Endothelial cell of umbilical vein (primary cell): ENCODE measurements at regions of chr11 and their contacts with region 1.

Region 1: GRCh38 chr11:19561011-19561410 is 151.6 kb upstream of the NAV2 start:
- DNase-seq: peak; percentile 81
- H3K4me3 ChIP-seq: no peak overlapping the region
- H3K27ac ChIP-seq: peak overlapping the region; percentile 61
- H3K4me1 ChIP-seq: peaks cover 23% of the 10 kb centered on the region
- H3K27me3 ChIP-seq: no peaks in the 10 kb centered on the region
- CTCF ChIP-seq: no peak
- POLR2A ChIP-seq: no peak

Region 2: GRCh38 chr11:19595840-19596751 is 35.1 kb after region 1 on chr11:
- CTCF ChIA-PET with region 1: interaction called, 21 read pairs
- POLR2A ChIA-PET with region 1: no interaction called
- dilution Hi-C with region 1: no loop called
- intact Hi-C with region 1: loop called (anchors 1 kb)
- DNase-seq: peak; percentile 91
- H3K4me3 ChIP-seq: no peak overlapping the region
- H3K27ac ChIP-seq: peak overlapping the region; percentile 95
- H3K4me1 ChIP-seq: peaks cover 34% of the 10 kb centered on the region
- H3K27me3 ChIP-seq: no peaks in the 10 kb centered on the region
- CTCF ChIP-seq: no peak
- POLR2A ChIP-seq: no peak

Region 3: DNA sequence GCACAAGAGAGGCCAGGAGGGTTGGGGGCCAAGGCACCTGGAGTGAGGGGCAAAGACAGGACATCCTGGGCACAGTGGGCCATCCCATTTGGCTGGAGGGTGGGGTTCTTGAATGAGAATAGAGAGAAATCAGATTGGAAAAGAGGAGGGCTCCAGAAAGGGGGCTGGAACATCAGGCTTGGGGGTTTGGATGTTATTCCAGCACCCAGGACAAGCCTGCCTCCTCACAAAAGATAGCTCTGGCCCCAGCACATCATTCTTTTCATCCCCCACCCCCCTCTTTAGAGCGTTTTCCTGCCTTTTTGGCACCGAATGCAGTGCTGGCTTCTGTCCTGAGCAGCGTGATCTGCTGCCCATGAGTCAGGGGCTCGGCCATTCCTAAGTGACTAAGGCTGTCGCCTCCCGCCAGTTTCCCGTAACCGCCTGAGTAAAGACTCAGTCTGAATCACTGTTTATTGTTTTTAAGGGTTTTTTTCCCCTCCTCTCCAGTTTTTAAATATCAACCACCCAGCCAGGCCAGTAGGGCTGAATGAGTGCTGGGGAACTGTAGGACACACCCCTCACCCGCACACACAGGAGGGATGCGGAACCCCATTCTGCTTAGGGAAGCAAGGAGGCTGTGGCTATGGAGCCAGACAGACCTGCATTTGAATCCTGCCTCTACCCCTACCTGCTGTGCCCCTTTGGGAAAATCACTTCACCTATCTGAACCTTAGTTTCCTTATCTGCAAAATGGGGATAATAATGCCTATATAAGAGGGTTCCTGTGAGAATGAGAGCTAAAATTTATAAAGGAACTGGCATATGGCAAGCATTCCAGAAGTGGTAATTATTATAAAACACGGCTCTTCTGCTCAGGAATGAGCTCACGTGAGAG is 119.2 kb after region 1 on chr11:
- CTCF ChIA-PET with region 1: interaction called, 8 read pairs
- POLR2A ChIA-PET with region 1: no interaction called
- dilution Hi-C with region 1: no loop called
- intact Hi-C with region 1: loop called (anchors 1 kb)
- DNase-seq: peak; percentile 98
- H3K4me3 ChIP-seq: no peak overlapping the region
- H3K27ac ChIP-seq: peak overlapping the region; percentile 99
- H3K4me1 ChIP-seq: peaks cover 49% of the 10 kb centered on the region
- H3K27me3 ChIP-seq: no peaks in the 10 kb centered on the region
- CTCF ChIP-seq: no peak
- POLR2A ChIP-seq: no peak

Region 4: GRCh38 chr11:19735157-19735908 is 174.3 kb after region 1 on chr11:
- CTCF ChIA-PET with region 1: interaction called, 79 read pairs
- POLR2A ChIA-PET with region 1: no interaction called
- dilution Hi-C with region 1: no loop called
- intact Hi-C with region 1: no loop called
- DNase-seq: no peak
- H3K4me3 ChIP-seq: no peak overlapping the region
- H3K27ac ChIP-seq: no peak overlapping the region
- H3K4me1 ChIP-seq: peaks cover 5% of the 10 kb centered on the region
- H3K27me3 ChIP-seq: no peaks in the 10 kb centered on the region
- CTCF ChIP-seq: no peak
- POLR2A ChIP-seq: no peak

Region 5: GRCh38 chr11:19800162-19800561 is 239.2 kb after region 1 on chr11:
- CTCF ChIA-PET with region 1: interaction called, 7 read pairs
- POLR2A ChIA-PET with region 1: no interaction called
- dilution Hi-C with region 1: no loop called
- intact Hi-C with region 1: loop called (anchors 1 kb)
- DNase-seq: peak; percentile 36
- H3K4me3 ChIP-seq: no peak overlapping the region
- H3K27ac ChIP-seq: no peak overlapping the region
- H3K4me1 ChIP-seq: no peaks in the 10 kb centered on the region
- H3K27me3 ChIP-seq: no peaks in the 10 kb centered on the region
- CTCF ChIP-seq: peak; percentile 14 to 47
- POLR2A ChIP-seq: no peak

Region 6: DNA sequence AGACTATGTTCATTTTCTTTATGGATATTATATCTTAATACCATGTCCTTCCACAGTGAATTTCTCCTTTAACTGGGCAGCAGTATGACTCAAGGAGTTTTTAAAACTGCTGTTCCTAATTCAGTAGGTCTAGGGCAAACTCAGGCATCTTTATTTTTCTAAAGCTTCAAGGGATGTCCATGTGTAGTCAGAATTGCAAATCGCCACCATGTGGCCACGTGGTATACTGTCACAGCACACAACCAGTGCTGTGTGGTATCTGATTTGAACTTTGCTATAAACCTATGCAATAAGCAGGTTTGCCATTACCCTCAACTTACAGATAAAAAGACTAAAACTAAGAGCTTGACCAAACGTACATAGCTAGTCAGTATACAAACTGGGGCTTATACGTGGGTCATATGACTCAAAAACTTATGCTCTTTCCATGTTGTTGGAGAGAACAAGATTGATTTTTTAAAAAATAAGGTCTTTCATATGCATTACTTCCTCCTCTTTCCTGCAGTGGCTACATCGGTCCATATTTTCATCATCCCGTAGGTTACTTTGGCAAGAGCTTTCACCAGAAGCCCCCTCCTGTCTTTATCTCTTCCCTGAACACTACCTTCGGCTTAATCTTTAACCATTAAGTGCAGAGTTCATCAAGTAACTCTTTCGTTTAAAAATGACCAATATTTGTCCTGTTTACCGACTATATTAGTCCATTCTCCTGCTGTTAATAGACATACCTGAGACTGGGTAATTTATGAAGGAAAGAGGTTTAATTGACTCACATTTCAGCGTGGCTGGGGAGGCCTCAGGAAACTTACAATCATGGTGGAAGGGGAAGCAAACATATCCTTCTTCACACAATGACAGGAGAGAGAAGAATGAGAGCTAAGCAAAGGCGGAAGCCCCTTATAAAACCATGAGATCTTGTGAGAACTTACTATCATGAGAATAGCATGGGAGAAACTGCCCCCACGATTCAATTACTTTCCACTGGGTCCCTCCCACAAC is 794.5 kb after region 1 on chr11:
- CTCF ChIA-PET with region 1: interaction called, 8 read pairs
- POLR2A ChIA-PET with region 1: no interaction called
- dilution Hi-C with region 1: no loop called
- intact Hi-C with region 1: loop called (anchors 10 kb)
- DNase-seq: peak; percentile 64
- H3K4me3 ChIP-seq: no peak overlapping the region
- H3K27ac ChIP-seq: no peak overlapping the region
- H3K4me1 ChIP-seq: peaks cover 6% of the 10 kb centered on the region
- H3K27me3 ChIP-seq: peaks cover 2 to 10% of the 10 kb centered on the region in 2 experiments
- CTCF ChIP-seq: peak; percentile 47 to 68
- POLR2A ChIP-seq: no peak